Natural killer cell (primary cell): ENCODE measurements at regions of chr11 and their contacts with region 1.

Region 1: GRCh38 chr11:58152781-58153180 is 27.5 kb upstream of the OR9I1 start:
- DNase-seq: no peak
- ATAC-seq: no peak
- H3K4me3 ChIP-seq: no peak overlapping the region
- H3K4me3 Mint-ChIP-seq: no peak overlapping the region
- H3K27ac ChIP-seq: no peak overlapping the region
- H3K27ac Mint-ChIP-seq: no peak overlapping the region
- H3K4me1 ChIP-seq: no peaks in the 10 kb centered on the region
- H3K4me1 Mint-ChIP-seq: no peaks in the 10 kb centered on the region
- H3K27me3 ChIP-seq: peaks cover 2% of the 10 kb centered on the region
- H3K27me3 Mint-ChIP-seq: peaks cover 0 to 7% of the 10 kb centered on the region in 2 donors
- CTCF ChIP-seq: no peak

Region 2: DNA sequence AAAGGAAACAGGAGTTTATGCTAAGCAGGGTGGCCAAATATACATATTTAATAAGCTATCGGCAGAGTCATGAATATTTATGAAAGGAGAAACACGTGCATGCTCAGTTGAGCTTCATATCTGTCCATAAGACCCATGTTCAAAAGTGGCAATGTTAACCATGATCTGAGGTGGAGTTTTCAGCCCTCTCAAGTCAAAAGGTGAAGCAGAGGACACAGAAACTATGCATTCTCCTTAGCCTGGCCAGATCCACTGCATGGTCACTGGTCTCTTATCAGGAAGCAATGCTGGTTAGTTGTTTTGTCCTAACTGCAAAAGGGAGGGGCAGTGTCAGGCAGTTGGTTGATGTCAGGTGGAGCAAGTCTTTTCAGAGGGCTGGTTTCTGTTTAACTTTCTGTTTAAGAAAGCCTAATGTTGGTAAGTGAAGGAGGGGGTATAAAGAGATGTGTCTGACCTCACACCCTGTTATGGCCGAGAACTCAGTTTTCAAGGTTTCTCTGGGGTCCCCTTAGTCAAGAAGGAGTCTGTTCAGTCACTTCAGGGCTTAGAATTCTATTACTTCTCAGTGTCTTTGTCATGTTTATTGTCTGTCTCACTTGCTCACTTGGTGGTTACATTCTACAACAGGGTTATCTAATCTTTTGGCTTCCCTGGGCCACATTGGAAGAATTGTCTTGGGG is 417.0 kb before region 1 on chr11:
- intact Hi-C with region 1: no loop called
- DNase-seq: no peak
- ATAC-seq: no peak
- H3K4me3 ChIP-seq: no peak overlapping the region
- H3K4me3 Mint-ChIP-seq: no peak overlapping the region
- H3K27ac ChIP-seq: no peak overlapping the region
- H3K27ac Mint-ChIP-seq: no peak overlapping the region
- H3K4me1 ChIP-seq: peaks cover under 1% of the 10 kb centered on the region
- H3K4me1 Mint-ChIP-seq: peaks cover 6 to 8% of the 10 kb centered on the region in 2 donors
- H3K27me3 ChIP-seq: no peaks in the 10 kb centered on the region
- H3K27me3 Mint-ChIP-seq: no peaks in the 10 kb centered on the region
- CTCF ChIP-seq: no peak

Region 3: DNA sequence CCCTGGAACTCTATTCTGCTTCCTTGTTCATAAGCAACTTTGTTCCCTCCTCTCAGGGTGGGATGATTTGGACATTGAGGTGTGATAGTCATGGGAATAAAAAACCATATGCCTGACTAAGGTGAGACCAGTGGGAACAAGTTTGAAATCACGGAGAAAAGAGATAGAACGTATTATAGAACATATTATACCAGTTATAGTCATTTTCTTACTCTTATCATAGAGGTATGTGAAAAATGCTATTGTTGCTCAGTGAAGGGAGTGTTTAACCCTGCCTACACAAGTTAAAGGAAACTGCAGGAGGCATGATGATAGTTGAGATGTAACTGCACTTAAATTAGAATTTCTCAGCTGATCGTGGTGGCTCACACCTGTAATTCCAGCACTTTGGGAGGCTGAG is 106.5 kb before region 1 on chr11:
- intact Hi-C with region 1: no loop called
- DNase-seq: no peak
- ATAC-seq: no peak
- H3K4me3 ChIP-seq: no peak overlapping the region
- H3K4me3 Mint-ChIP-seq: no peak overlapping the region
- H3K27ac ChIP-seq: no peak overlapping the region
- H3K27ac Mint-ChIP-seq: no peak overlapping the region
- H3K4me1 ChIP-seq: no peaks in the 10 kb centered on the region
- H3K4me1 Mint-ChIP-seq: no peaks in the 10 kb centered on the region
- H3K27me3 ChIP-seq: no peaks in the 10 kb centered on the region
- H3K27me3 Mint-ChIP-seq: no peaks in the 10 kb centered on the region
- CTCF ChIP-seq: no peak

Region 4: GRCh38 chr11:58216476-58216875 is 63.7 kb after region 1 on chr11:
- intact Hi-C with region 1: loop called (anchors 10 kb)
- DNase-seq: no peak
- ATAC-seq: no peak
- H3K4me3 ChIP-seq: no peak overlapping the region
- H3K4me3 Mint-ChIP-seq: no peak overlapping the region
- H3K27ac ChIP-seq: no peak overlapping the region
- H3K27ac Mint-ChIP-seq: no peak overlapping the region
- H3K4me1 ChIP-seq: no peaks in the 10 kb centered on the region
- H3K4me1 Mint-ChIP-seq: no peaks in the 10 kb centered on the region
- H3K27me3 ChIP-seq: no peaks in the 10 kb centered on the region
- H3K27me3 Mint-ChIP-seq: peaks cover 0 to 6% of the 10 kb centered on the region in 2 donors
- CTCF ChIP-seq: no peak